ENCODE measurements at regions of chr5 and their contacts with region 1.

Region 1: GRCh38 chr5:103119765-103120606 is at the starts of genes GIN1 and PPIP5K2:
- DNase-seq: peak; percentile 96
- H3K4me3 ChIP-seq: peak within 1 kb of the TSS; percentile 84 to 96 (median 90)
- H3K27ac ChIP-seq: peak within 1 kb of the TSS; percentile 96
- H3K4me1 ChIP-seq: peaks cover 0 to 3% (median under 1%) of the 10 kb centered on the region in 4 experiments; a peak in 2 of 7 replicates
- H3K27me3 ChIP-seq: no peaks in the 10 kb centered on the region
- CTCF ChIP-seq: no peak
- EP300 ChIP-seq: peak in 1 of 2 experiments; percentile 73; a peak in 1 of 3 replicates
- POLR2A ChIP-seq: peak; percentile 25 to 92
- RAD21 ChIP-seq: no peak
- total RNA-seq, gene GIN1: 7.0 and 7.1 TPM in 2 replicates
- total RNA-seq, gene PPIP5K2: 39.1 and 46.6 TPM in 2 replicates

Region 2: GRCh38 chr5:103098993-103099392 is 21.0 kb before region 1 on chr5:
- CTCF ChIA-PET with region 1: interaction called, 3 read pairs
- POLR2A ChIA-PET with region 1: interaction called, 10 read pairs
- DNase-seq: no peak
- H3K4me3 ChIP-seq: no peak overlapping the region
- H3K27ac ChIP-seq: no peak overlapping the region
- H3K4me1 ChIP-seq: no peaks in the 10 kb centered on the region
- H3K27me3 ChIP-seq: no peaks in the 10 kb centered on the region
- CTCF ChIP-seq: no peak
- EP300 ChIP-seq: no peak
- POLR2A ChIP-seq: no peak
- RAD21 ChIP-seq: no peak

Region 3: GRCh38 chr5:103315455-103315854 is 195.5 kb after region 1 on chr5:
- CTCF ChIA-PET with region 1: no interaction called
- POLR2A ChIA-PET with region 1: no interaction called
- DNase-seq: no peak
- H3K4me3 ChIP-seq: no peak overlapping the region
- H3K27ac ChIP-seq: no peak overlapping the region
- H3K4me1 ChIP-seq: no peaks in the 10 kb centered on the region
- H3K27me3 ChIP-seq: no peaks in the 10 kb centered on the region
- CTCF ChIP-seq: no peak
- EP300 ChIP-seq: no peak
- POLR2A ChIP-seq: no peak
- RAD21 ChIP-seq: no peak